Activated naive CD8-positive, alpha-beta T cell treated with anti-CD3 and anti-CD28 coated beads, Interleukin-2, amount 10 ng/mL, durations not matched to agents 7 days and 5 days (primary cell): ENCODE measurements at regions of chr1 and their contacts with region 1.

Region 1: GRCh38 chr1:160539990-160540858 is 17.2 kb upstream of the SLAMF6 start:
- DNase-seq: no peak
- ATAC-seq: peak; percentile 94
- H3K4me3 Mint-ChIP-seq: peak overlapping the region; percentile 74
- H3K27ac Mint-ChIP-seq: peak overlapping the region; percentile 91
- H3K4me1 Mint-ChIP-seq: peaks cover 43% of the 10 kb centered on the region
- H3K27me3 Mint-ChIP-seq: no peaks in the 10 kb centered on the region

Region 2: DNA sequence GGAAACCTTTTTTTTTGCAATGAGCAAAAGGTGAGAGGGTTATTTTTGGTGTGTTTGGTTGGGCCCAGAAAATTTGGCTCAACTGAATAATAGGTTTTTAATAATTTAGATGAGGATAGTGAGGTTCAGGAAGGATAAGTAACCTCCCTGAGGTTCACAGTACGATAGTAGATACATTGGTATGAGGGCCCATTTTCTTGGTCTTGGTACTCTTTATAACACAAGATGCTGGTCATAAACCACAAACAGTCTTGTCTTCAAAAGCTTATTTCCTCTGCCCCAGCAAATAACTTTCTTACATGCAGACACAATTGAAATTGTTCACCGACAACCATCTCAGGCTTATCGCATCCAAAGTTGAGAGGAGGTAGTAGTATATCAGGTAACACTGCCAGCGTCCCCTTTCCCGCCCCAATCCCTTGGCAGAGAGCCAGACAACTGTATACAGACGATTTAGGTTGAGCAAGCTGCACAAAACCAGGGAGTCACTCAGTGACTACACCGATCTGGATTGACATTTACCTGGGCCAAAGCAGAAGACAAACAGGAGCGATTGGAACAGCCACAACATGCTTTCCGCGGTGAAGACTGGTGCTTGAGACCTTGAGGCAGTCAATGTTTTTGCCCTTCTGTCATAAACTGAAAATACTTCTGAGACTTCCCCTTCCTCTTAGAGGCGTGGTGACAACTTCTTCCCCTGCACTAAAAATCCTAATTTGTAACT is 17.4 kb before region 1 on chr1 and contains the start of gene SLAMF6:
- POLR2A ChIA-PET with region 1: interaction called, 24 read pairs
- DNase-seq: peak; percentile 62
- ATAC-seq: peak; percentile 72
- H3K4me3 Mint-ChIP-seq: peak within 1 kb of the TSS; percentile 91
- H3K27ac Mint-ChIP-seq: peak within 1 kb of the TSS; percentile 93
- H3K4me1 Mint-ChIP-seq: peaks cover 47% of the 10 kb centered on the region
- H3K27me3 Mint-ChIP-seq: no peaks in the 10 kb centered on the region
- total RNA-seq, gene SLAMF6: 43.0 to 48.1 TPM

Region 3: GRCh38 chr1:160550572-160551034 is 10.4 kb after region 1 on chr1:
- POLR2A ChIA-PET with region 1: no interaction called
- DNase-seq: peak; percentile 70
- ATAC-seq: peak; percentile 82
- H3K4me3 Mint-ChIP-seq: no peak overlapping the region
- H3K27ac Mint-ChIP-seq: no peak overlapping the region
- H3K4me1 Mint-ChIP-seq: peaks cover 9% of the 10 kb centered on the region
- H3K27me3 Mint-ChIP-seq: no peaks in the 10 kb centered on the region